ENCODE measurements at regions of chr10 and their contacts with region 1.

Region 1: DNA sequence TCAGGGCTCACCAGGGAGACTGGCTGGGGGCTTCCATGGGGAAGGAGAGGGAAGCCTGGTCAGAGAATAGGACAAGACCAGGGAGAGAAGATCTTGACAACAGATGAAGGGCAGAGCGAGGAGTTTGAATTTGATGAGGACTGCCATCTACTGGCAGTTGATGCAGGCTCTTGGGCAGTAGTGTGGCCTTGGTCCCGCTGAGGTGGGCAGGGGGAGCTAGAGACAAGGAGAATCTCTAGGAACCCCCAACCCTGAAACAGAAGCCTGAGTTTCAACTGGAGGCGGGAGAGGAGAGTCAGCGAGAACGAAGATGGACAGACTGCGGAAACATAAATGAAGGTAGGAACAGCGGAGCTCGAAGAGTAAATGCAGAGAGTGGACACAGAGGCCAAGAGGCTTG is 81.0 kb downstream of the PPP1R3C start:
- DNase-seq: peak; percentile 46
- H3K4me3 ChIP-seq: no peak overlapping the region
- H3K27ac ChIP-seq: no peak overlapping the region
- H3K4me1 ChIP-seq: no peaks in the 10 kb centered on the region
- H3K27me3 ChIP-seq: no peaks in the 10 kb centered on the region
- CTCF ChIP-seq: no peak

Region 2: DNA sequence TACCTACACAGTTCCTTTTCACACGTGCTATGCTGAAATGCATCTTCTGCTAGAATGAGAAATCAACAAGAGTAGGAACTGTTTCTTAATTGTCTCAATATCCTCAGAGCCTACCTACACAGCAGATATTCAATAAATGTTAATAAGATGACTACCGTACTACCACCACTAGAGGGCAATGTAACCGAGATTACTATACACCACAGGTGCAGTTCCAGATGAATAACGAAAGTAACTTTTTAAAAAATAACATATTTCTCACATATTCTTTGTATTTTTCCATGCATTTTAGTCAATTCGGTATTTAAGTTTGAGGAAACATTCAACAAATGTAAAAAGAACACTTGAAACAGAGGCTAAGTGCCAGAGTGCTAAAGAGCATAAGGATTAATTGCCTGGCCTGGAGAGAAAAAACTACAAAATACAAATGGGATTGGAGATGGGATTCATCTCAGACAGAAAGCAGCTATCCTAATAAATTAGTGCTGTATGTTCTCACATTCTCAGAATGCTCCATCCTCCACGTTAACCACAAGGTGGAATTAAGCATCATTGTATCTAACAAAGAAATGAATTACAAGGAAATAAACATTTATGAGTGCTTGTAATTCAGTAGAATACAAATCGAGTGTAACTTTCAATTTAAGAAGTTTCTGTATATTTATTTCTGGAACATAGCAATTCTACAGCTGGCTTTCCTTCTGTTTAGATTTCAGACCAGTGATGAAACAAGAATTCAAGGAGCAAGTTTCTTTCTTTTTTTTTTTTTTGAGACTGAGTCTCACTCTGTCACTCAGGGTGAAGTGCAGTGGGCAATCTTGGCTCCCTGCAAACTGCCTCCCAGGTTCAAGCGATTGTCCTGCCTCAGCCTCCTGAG is 162.0 kb before region 1 on chr10:
- intact Hi-C with region 1: loop called (anchors 10 kb)
- DNase-seq: peak; percentile 21
- H3K4me3 ChIP-seq: no peak overlapping the region
- H3K27ac ChIP-seq: no peak overlapping the region
- H3K4me1 ChIP-seq: peaks cover 3% of the 10 kb centered on the region
- H3K27me3 ChIP-seq: no peaks in the 10 kb centered on the region
- CTCF ChIP-seq: peak; percentile 62

Region 3: GRCh38 chr10:91434041-91434440 is 117.8 kb before region 1 on chr10:
- intact Hi-C with region 1: no loop called
- DNase-seq: no peak
- H3K4me3 ChIP-seq: no peak overlapping the region
- H3K27ac ChIP-seq: no peak overlapping the region
- H3K4me1 ChIP-seq: no peaks in the 10 kb centered on the region
- H3K27me3 ChIP-seq: no peaks in the 10 kb centered on the region
- CTCF ChIP-seq: no peak

Measured in colonic mucosa (tissue), 4 donors.